Naive thymus-derived CD4-positive, alpha-beta T cell (primary cell): ENCODE measurements at regions of chr12 and their contacts with region 1.

Region 1: DNA sequence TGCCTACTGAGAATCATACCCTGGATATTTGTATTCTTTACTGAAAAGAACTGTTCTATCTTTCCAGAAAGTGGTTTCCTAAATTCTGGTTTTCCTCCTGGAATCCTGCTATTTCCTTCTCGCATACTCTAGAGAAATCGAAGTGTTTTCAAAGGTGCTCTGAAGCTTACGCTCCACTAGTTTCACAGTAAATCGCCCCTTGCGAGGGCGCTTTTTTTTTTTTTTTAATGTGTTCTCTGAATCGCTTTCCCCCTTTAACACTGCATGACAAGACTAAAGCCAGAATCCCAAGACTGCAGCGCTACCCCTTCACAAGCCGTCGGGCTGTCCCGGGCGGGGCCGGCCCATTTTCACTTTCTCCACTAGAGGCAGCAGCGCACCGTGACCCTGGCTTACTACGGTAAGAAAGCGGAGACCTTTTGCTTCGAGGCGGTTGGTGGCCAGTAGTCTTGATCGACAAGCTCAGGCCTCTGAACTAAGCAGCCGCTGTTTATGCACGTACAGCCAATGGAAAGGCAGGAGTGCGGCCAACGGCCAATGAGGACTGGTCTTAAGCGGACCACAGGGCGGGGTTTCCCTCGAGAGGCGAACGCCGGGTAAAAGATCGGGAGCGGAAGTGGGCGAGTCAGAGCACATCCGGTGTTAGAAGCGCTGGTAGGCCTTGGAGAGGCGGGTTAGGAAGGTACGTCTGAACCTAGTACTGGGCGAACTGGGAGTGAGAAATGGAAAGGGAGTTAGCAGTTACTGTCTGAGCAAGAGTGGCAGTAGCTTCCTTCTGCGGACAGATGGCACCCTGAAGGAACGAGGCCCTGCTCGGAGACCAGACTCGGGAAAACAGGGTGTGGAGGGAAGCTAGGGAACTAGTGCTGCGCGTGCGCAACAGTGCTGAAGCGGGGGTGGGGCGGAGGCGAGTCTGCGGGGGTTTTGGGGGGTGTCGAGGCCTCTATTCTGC is at the start of gene TMBIM6:
- DNase-seq: peak; percentile 92 to 100 (median 99)
- ATAC-seq: peak; percentile 92
- H3K4me3 ChIP-seq: peak within 1 kb of the TSS; percentile 80
- H3K4me3 Mint-ChIP-seq: peak within 1 kb of the TSS; percentile 91 to 98 (median 94)
- H3K27ac ChIP-seq: peak within 1 kb of the TSS; percentile 96
- H3K27ac Mint-ChIP-seq: peak within 1 kb of the TSS; percentile 96 to 99 (median 98)
- H3K4me1 ChIP-seq: peaks cover 27 to 37% of the 10 kb centered on the region in 2 donors
- H3K4me1 Mint-ChIP-seq: peaks cover 25 to 49% (median 36%) of the 10 kb centered on the region in 7 donors
- H3K27me3 ChIP-seq: no peaks in the 10 kb centered on the region
- H3K27me3 Mint-ChIP-seq: peaks cover 0 to 6% (median 0%) of the 10 kb centered on the region in 5 donors
- total RNA-seq, gene TMBIM6: 307 to 432 (median 381) TPM

Region 2: DNA sequence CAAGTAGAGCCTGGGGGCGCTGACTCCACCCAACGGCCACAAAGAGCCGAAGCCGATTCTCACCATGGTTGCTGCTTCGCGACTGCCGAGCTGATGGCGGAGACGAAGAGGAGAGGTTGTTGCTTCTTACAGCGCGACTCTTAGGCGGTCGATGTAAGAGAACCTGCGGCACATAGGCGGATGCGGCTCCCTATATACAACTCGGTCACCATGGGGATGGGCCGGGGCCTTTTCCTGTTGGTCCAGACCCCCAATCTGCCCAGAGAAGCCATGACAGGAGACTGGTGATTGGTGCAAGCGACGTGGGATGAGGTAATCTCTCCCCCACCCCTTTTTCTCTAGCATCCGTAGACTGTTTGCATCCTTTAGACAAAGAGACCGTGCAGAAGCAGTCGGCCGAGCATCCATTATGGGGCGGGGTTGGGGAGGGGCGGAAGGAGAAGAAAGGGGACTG is 552.3 kb before region 1 on chr12 and contains the start of gene TUBA1A:
- CTCF ChIA-PET with region 1: no interaction called
- POLR2A ChIA-PET with region 1: interaction called, 3 read pairs
- intact Hi-C with region 1: loop called (anchors 1 to 5 kb)
- DNase-seq: peak; percentile 80 to 99 (median 98)
- ATAC-seq: peak; percentile 93
- H3K4me3 ChIP-seq: peak within 1 kb of the TSS; percentile 91
- H3K4me3 Mint-ChIP-seq: peak within 1 kb of the TSS; percentile 94 to 99 (median 98)
- H3K27ac ChIP-seq: peak within 1 kb of the TSS; percentile 99
- H3K27ac Mint-ChIP-seq: peak within 1 kb of the TSS; percentile 98 to 100 (median 99)
- H3K4me1 ChIP-seq: peaks cover 7 to 12% of the 10 kb centered on the region in 2 donors
- H3K4me1 Mint-ChIP-seq: peaks cover 11 to 32% (median 26%) of the 10 kb centered on the region in 7 donors
- H3K27me3 ChIP-seq: no peaks in the 10 kb centered on the region
- H3K27me3 Mint-ChIP-seq: peaks cover 0 to 5% (median 0%) of the 10 kb centered on the region in 5 donors
- total RNA-seq, gene TUBA1A: 61.8 to 492 (median 98.8) TPM

Region 3: GRCh38 chr12:49623142-49623904 is 117.9 kb before region 1 on chr12 and contains the start of gene PRPF40B:
- CTCF ChIA-PET with region 1: interaction called, 5 read pairs
- POLR2A ChIA-PET with region 1: interaction called, 5 read pairs
- intact Hi-C with region 1: loop called (anchors 1 kb)
- DNase-seq: peak; percentile 82 to 92 (median 89)
- ATAC-seq: peak; percentile 89
- H3K4me3 ChIP-seq: peak within 1 kb of the TSS; percentile 42
- H3K4me3 Mint-ChIP-seq: peak within 1 kb of the TSS; percentile 86 to 96 (median 91)
- H3K27ac ChIP-seq: peak within 1 kb of the TSS; percentile 66
- H3K27ac Mint-ChIP-seq: peak within 1 kb of the TSS; percentile 81 to 95 (median 91)
- H3K4me1 ChIP-seq: peaks cover 6 to 22% of the 10 kb centered on the region in 2 donors
- H3K4me1 Mint-ChIP-seq: peaks cover 19 to 29% (median 23%) of the 10 kb centered on the region in 7 donors
- H3K27me3 ChIP-seq: no peaks in the 10 kb centered on the region
- H3K27me3 Mint-ChIP-seq: peaks cover 0 to 32% (median 0%) of the 10 kb centered on the region in 5 donors
- total RNA-seq, gene PRPF40B: 7.8 to 24.1 (median 12.1) TPM

Region 4: GRCh38 chr12:49673446-49674317 is 67.5 kb before region 1 on chr12:
- CTCF ChIA-PET with region 1: no interaction called
- POLR2A ChIA-PET with region 1: interaction called, 8 read pairs
- intact Hi-C with region 1: loop called in 1 of 2 experiments (anchors 2 kb)
- DNase-seq: peak in 3 of 9 donors; percentile 11 to 26 (median 12)
- ATAC-seq: no peak
- H3K4me3 ChIP-seq: no peak overlapping the region
- H3K4me3 Mint-ChIP-seq: peak overlapping the region; percentile 18 to 85 (median 70)
- H3K27ac ChIP-seq: peak overlapping the region; percentile 85
- H3K27ac Mint-ChIP-seq: peak overlapping the region; percentile 71 to 99 (median 96)
- H3K4me1 ChIP-seq: peaks cover 39 to 64% of the 10 kb centered on the region in 2 donors
- H3K4me1 Mint-ChIP-seq: peaks cover 60 to 92% (median 92%) of the 10 kb centered on the region in 7 donors
- H3K27me3 ChIP-seq: no peaks in the 10 kb centered on the region
- H3K27me3 Mint-ChIP-seq: no peaks in the 10 kb centered on the region

Region 5: GRCh38 chr12:49828133-49829091 is 87.2 kb after region 1 on chr12 and contains the start of gene NCKAP5L:
- CTCF ChIA-PET with region 1: interaction called, 3 read pairs
- POLR2A ChIA-PET with region 1: interaction called, 12 read pairs
- intact Hi-C with region 1: loop called (anchors 1 kb)
- DNase-seq: peak; percentile 86 to 94 (median 93)
- ATAC-seq: peak; percentile 96
- H3K4me3 ChIP-seq: peak within 1 kb of the TSS; percentile 82
- H3K4me3 Mint-ChIP-seq: peak within 1 kb of the TSS; percentile 88 to 99 (median 96)
- H3K27ac ChIP-seq: peak within 1 kb of the TSS; percentile 79
- H3K27ac Mint-ChIP-seq: peak within 1 kb of the TSS; percentile 89 to 99 (median 95)
- H3K4me1 ChIP-seq: peaks cover 8 to 16% of the 10 kb centered on the region in 2 donors
- H3K4me1 Mint-ChIP-seq: peaks cover 7 to 42% (median 30%) of the 10 kb centered on the region in 7 donors
- H3K27me3 ChIP-seq: no peaks in the 10 kb centered on the region
- H3K27me3 Mint-ChIP-seq: peaks cover 0 to 13% (median 0%) of the 10 kb centered on the region in 5 donors
- total RNA-seq, gene NCKAP5L: 4.3 to 27.5 (median 12.0) TPM

Region 6: GRCh38 chr12:50084775-50085614 is 343.8 kb after region 1 on chr12 and contains the start of gene SMARCD1:
- CTCF ChIA-PET with region 1: no interaction called
- POLR2A ChIA-PET with region 1: interaction called, 4 read pairs
- intact Hi-C with region 1: loop called in 1 of 2 experiments (anchors 1 kb)
- DNase-seq: peak; percentile 65 to 85 (median 76)
- ATAC-seq: peak; percentile 92
- H3K4me3 ChIP-seq: peak within 1 kb of the TSS; percentile 82
- H3K4me3 Mint-ChIP-seq: peak within 1 kb of the TSS; percentile 87 to 98 (median 94)
- H3K27ac ChIP-seq: peak within 1 kb of the TSS; percentile 98
- H3K27ac Mint-ChIP-seq: peak within 1 kb of the TSS; percentile 93 to 99 (median 96)
- H3K4me1 ChIP-seq: peaks cover 0 to 5% of the 10 kb centered on the region in 2 donors
- H3K4me1 Mint-ChIP-seq: peaks cover 6 to 46% (median 40%) of the 10 kb centered on the region in 7 donors
- H3K27me3 ChIP-seq: no peaks in the 10 kb centered on the region
- H3K27me3 Mint-ChIP-seq: no peaks in the 10 kb centered on the region
- total RNA-seq, gene SMARCD1: 65.1 to 88.5 (median 67.5) TPM